Transverse colon (tissue), 4 donors: ENCODE measurements at regions of chr7 and their contacts with region 1.

Region 1: GRCh38 chr7:153381275-153382040 is 621.9 kb downstream of the ACTR3B start:
- DNase-seq: peak; percentile 21
- H3K4me3 ChIP-seq: no peak overlapping the region
- H3K27ac ChIP-seq: peak overlapping the region in 3 of 4 donors; percentile 52 to 77 (median 60)
- H3K4me1 ChIP-seq: peaks cover 0 to 2% (median 0%) of the 10 kb centered on the region in 4 donors
- H3K27me3 ChIP-seq: no peaks in the 10 kb centered on the region
- CTCF ChIP-seq: peak; percentile 57 to 82 (median 72)
- EP300 ChIP-seq: no peak
- POLR2A ChIP-seq: no peak

Region 2: DNA sequence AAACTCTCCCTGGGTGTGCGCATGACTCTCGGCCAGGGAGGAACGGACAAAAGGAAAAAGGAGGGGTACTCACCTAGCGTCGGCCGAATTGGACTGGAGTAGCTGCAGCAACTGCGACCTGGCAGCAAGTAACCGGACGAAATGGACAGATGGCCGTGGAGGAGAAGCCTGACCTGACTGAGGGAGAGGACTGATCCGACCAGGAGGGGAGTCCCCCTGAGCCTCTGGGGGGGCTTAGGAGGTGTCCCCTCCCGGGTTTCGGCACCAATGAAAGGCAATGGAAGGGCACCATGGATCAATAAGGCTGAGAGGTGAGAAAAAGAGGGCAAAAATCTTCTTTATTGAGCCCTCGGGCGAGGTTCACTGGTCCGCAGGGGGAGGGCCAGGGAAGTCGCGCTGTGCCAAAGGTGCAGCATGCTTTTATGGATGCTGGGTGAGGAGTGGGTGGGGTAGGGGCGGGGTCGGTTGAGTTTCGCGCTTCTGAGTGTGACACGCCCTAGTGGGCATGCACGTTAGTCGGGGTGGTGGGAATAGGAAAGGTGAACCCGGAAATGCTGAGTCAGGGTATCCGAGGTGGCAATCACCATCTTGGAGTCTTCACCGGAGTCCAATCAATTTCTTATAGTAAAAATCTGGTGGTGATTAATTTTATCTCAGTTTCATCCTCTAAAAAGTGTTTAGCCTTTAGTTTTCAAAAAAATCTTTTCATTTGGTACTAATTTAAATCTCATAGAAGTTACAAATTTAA is 32.3 kb after region 1 on chr7:
- in situ Hi-C with region 1: no loop called
- intact Hi-C with region 1: no loop called
- DNase-seq: no peak
- H3K4me3 ChIP-seq: no peak overlapping the region
- H3K27ac ChIP-seq: no peak overlapping the region
- H3K4me1 ChIP-seq: no peaks in the 10 kb centered on the region
- H3K27me3 ChIP-seq: no peaks in the 10 kb centered on the region
- CTCF ChIP-seq: no peak
- EP300 ChIP-seq: no peak
- POLR2A ChIP-seq: no peak

Region 3: GRCh38 chr7:153835104-153835503 is 453.6 kb after region 1 on chr7:
- in situ Hi-C with region 1: loop called in 1 of 4 experiments (anchors 25 kb)
- intact Hi-C with region 1: no loop called
- DNase-seq: no peak
- H3K4me3 ChIP-seq: no peak overlapping the region
- H3K27ac ChIP-seq: peak overlapping the region in 3 of 4 donors; percentile 20 to 58 (median 43)
- H3K4me1 ChIP-seq: peaks cover 0 to 3% (median 0%) of the 10 kb centered on the region in 4 donors
- H3K27me3 ChIP-seq: no peaks in the 10 kb centered on the region
- CTCF ChIP-seq: peak in 2 of 5 experiments; percentile 7 to 25
- EP300 ChIP-seq: no peak
- POLR2A ChIP-seq: no peak